AG04449 (cell line): ENCODE measurements at regions of chr11 and their contacts with region 1.

Region 1: DNA sequence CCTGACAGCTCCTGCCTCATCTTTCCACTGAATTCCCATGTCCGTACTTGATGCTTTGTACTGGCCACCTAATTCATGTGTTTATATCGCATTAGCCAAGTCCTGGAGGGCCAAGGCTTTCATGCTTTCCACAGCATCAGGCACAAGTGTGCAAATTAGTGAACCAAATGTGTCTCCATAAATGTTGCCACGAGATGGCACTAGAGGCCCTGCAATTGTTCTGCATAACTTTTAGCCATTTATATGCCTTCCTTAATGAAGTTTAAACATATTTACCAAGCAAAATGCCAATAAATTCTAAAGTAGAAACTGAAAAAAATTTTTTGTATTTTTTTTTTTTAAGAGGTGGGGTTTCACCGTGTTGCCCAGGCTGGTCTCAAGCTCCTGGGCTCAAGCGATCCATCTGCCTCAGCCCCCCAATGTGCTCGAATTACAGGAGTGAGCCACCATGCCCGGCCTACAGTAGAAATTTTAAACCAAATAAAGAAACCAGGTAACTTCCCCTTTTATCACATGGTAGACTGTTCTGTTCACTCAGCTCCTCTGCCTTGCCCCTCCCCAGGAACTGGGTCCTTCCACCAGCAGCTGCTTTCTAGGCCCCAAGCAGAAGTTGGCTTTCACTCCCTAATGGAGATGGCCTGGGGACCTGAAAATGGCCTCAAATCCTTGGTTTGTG is 20.8 kb upstream of the IL18BP start:
- DNase-seq: no peak
- H3K4me3 ChIP-seq: no peak overlapping the region
- CTCF ChIP-seq: peak; percentile 57

Region 2: DNA sequence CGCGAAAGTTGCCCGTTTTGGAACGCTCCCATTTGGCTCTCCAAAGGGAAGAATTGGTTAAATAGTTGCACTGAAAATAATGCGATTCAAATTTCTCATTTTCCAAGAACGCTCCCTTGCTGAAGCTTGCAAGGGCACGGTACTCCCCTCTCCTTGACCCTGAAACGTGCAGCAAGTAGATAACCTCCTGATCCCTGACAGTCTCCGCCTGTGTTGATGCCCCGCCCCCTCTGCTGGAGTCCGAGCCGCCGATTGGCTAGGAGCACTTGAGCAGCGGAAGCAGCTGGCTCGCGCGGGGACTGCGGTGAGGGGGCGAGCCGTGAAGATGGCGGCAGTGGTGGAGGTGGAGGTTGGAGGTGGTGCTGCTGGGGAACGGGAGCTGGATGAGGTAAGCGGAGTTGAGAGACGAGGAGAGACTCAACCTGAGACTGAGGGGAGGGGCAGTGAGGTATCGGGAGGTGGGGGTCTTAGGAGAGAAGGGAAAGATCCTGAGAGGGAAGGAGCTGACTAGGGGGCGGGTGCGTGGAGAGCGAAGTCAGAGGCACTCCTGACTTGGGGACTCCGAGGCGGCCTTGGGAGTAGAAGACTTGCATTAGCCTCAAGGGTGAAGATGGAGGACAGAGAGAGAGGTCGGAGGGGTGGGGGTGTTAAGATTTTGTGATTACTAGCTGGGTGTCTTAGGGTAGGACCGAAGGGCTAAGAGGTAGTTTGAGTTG is 49.0 kb before region 1 on chr11 and contains the start of gene RNF121:
- CTCF ChIA-PET with region 1: interaction called, 21 read pairs
- POLR2A ChIA-PET with region 1: no interaction called
- DNase-seq: no peak
- H3K4me3 ChIP-seq: peak within 1 kb of the TSS; percentile 98
- CTCF ChIP-seq: no peak

Region 3: DNA sequence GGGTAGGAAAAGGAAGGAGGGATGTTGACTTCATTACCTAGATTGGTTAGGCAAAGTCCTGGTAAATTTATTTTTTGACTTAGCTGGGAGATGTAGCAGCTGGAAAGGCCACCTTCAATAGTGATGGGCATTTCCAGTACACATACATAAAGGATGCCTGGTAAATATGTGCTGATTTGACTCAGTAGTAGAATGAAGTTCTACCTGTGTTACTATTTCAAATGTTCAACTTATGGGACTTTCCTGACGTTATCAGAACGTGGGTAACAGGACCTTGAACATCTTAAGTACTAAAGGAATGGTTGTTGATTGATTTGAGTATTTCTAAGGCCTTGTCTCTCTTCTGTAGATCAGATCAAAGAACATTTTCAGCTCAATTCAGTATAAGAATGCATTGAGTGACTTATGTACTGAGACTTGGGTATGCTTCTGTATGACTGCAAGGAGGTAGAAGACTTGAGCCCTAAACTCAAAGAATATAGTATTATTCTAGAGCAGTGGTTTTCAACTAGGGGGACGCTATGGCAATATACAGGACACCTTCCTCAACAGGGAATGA is 21.9 kb before region 1 on chr11:
- CTCF ChIA-PET with region 1: interaction called, 26 read pairs
- POLR2A ChIA-PET with region 1: no interaction called
- DNase-seq: no peak
- H3K4me3 ChIP-seq: no peak overlapping the region
- CTCF ChIP-seq: no peak

Region 4: DNA sequence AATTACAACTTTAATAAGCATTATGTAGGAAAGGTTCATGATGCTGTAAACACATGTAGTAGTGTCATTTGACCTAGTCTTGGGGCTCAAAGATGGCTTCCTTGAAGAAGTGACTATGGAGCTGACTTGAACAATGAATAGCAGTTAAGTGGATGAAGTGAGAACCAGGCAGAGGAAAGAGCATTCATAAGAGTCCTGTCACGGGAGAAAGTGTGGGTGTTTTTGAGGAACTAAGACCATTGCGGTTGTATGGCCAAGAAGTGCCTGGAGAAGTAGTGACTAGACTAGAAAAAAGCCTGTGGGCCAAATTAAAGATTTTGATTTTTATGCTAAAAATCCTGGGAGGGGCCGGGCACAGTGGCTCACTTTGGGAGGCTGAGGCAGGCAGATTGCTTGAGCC is 13.6 kb after region 1 on chr11:
- CTCF ChIA-PET with region 1: interaction called, 95 read pairs
- POLR2A ChIA-PET with region 1: no interaction called
- DNase-seq: no peak
- H3K4me3 ChIP-seq: no peak overlapping the region
- CTCF ChIP-seq: no peak

Region 5: DNA sequence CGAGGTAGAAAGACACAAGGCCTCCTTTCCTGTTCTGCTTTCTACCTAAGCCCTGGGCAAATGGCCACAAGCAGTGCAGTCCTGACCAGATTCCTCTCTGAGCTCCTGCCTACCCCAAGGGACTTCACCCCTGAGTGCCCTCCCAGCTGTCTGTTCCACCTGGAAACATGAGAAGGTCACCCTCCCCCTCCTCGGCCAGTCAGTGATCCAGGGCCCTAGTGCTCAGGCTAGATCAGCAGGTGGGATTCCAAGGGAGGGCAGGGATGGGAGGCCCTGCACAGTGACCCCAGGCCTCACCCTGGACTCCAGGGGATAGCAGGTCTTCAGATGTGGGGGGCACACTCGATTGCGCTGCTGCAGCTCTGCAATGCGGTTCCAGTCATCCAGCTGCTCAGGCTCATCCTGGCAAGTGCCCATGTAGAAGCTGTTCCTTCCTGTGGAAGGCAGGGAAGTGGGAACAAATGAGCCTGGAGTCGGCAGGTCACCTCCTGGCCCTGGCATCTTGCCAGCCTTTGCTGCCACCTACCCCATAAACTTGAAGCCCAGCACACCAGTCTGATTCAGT is 27.1 kb after region 1 on chr11:
- CTCF ChIA-PET with region 1: interaction called, 12 read pairs
- POLR2A ChIA-PET with region 1: no interaction called
- DNase-seq: no peak
- H3K4me3 ChIP-seq: no peak overlapping the region
- CTCF ChIP-seq: no peak

Region 6: DNA sequence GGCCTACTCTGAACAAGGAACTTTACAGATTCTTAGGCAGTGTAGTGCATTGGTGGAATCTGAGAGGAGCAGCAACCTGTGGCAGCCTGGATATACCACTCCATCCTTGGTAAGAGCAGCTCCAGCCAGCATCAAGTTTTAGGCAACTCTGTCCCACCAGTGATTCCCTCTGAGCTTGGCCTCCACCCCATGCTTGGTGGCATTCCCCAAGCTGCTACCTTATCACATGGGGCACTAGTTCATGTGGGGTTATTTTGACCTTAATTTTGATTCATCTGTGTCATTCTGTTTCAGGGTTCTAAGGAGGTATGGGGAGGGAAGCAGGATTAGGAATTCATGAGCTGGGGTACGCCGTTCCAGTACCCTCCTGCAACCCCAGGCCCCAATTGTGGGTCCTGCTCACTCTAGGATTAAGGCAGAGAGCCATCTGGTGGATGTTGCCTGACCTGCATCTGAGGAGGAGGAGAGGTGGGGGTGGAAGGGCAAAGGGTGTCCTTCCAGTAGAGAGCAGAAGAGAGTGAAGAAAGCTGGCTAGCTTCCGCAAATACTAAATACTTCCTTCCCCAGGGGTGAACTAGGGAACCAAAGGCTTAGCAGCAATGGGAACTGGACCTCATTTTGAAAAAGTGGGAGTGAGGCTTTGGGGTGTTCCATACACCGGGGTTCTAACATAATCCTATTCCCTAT is 113.3 kb after region 1 on chr11:
- CTCF ChIA-PET with region 1: interaction called, 12 read pairs
- POLR2A ChIA-PET with region 1: no interaction called
- DNase-seq: no peak
- H3K4me3 ChIP-seq: no peak overlapping the region
- CTCF ChIP-seq: peak; percentile 91

Region 7: DNA sequence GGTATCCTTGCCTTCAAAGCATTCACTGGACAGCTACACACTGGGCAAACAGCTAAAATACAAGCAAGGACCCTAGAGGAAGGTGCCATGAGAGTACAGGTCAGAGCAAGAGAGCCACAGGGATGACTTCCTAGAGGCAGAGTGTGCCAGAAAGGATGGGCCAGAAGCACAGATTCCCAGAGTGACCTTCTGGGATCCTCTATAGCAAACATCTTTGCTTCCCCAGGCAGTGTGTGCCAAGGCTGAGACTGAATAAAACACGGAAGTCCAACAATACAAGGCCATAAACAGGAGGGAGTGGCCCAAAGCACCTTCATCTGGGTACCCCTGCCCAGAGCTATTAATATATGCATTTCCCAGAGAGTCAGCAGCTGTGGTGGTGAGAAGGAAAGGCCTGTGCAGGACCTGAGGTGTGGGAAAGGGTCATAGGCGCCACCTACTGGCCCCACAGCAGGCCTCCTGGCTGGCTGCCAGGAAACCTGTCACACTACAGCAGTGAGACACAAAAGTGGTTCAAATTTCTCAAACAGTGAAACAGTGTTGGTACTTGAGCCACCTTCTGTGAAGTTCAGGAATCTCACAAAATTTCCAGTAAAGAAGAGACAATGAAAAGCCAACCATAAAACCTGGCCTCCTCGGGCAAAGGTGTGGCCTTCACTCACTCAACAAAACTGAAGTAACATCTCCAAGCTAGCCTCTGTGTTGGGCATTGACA is 436.2 kb after region 1 on chr11:
- CTCF ChIA-PET with region 1: interaction called, 15 read pairs
- POLR2A ChIA-PET with region 1: no interaction called
- DNase-seq: no peak
- H3K4me3 ChIP-seq: no peak overlapping the region
- CTCF ChIP-seq: peak; percentile 92